ENCODE measurements at regions of chr2 and their contacts with region 1.

Region 1: DNA sequence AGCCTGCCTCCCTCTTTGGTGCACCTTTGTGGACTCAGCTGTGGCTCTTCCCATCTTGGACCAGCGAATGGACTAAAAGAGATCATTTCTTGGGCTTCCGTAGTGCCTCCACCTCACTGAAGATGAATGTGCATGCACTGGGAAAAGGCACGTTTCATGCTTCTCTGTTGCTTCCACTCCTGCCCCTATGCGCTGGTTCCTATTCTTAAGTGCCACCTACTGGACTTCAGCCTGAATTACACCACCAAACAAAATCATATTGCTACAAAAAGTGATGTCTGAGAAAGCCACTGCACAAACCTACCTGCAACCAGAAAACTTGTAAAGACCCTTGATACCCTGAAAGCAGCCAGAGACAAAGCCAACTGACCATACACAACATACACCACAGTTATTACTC is 695.6 kb downstream of the TSN start:
- DNase-seq: peak; percentile 21
- ATAC-seq: no peak
- H3K4me3 ChIP-seq: no peak overlapping the region
- H3K27ac ChIP-seq: no peak overlapping the region
- H3K4me1 ChIP-seq: no peaks in the 10 kb centered on the region
- H3K27me3 ChIP-seq: no peaks in the 10 kb centered on the region
- CTCF ChIP-seq: peak; percentile 62
- POLR2A ChIP-seq: no peak
- RAD21 ChIP-seq: peak; percentile 66

Region 2: GRCh38 chr2:121810959-121811853 is 639.8 kb before region 1 on chr2:
- CTCF ChIA-PET with region 1: interaction called, 3 read pairs
- POLR2A ChIA-PET with region 1: no interaction called
- dilution Hi-C with region 1: no loop called
- in situ Hi-C with region 1: loop called (anchors 25 kb)
- intact Hi-C with region 1: no loop called
- DNase-seq: peak; percentile 63
- ATAC-seq: peak; percentile 99
- H3K4me3 ChIP-seq: no peak overlapping the region
- H3K27ac ChIP-seq: no peak overlapping the region
- H3K4me1 ChIP-seq: no peaks in the 10 kb centered on the region
- H3K27me3 ChIP-seq: peaks cover 7% of the 10 kb centered on the region
- CTCF ChIP-seq: peak; percentile 64
- POLR2A ChIP-seq: no peak
- RAD21 ChIP-seq: peak; percentile 80

Measured in IMR-90 (cell line).